ENCODE measurements at regions of chr4 and their contacts with region 1.

Region 1: DNA sequence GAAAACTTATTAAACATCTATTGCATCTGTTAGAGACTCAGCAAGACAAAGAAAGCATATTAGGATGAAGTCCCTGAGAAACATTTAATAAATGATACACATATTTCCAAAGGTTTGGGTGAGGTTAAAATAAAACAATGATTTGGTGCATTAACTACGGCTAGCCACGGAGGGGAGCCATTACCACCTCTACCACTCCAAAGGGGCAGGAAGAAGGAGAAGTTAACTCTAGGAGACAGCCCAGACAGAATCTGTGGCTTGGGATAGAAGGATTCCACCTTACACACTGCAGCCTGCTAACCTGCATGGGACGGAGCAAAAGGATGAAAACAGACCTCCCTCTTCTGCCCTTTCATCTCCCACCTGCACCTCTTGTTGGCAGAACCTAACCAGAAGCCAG is 189.1 kb upstream of the C1QTNF7 start:
- DNase-seq: no peak
- ATAC-seq: peak; percentile 91
- H3K4me3 ChIP-seq: no peak overlapping the region
- H3K27ac ChIP-seq: no peak overlapping the region
- H3K4me1 ChIP-seq: no peaks in the 10 kb centered on the region
- H3K27me3 ChIP-seq: no peaks in the 10 kb centered on the region; the same call in 1 of the 2 replicates
- CTCF ChIP-seq: peak; percentile 45 to 67 (median 65); a peak in 4 of 6 replicates
- POLR2A ChIP-seq: no peak
- RAD21 ChIP-seq: peak; percentile 73

Region 2: DNA sequence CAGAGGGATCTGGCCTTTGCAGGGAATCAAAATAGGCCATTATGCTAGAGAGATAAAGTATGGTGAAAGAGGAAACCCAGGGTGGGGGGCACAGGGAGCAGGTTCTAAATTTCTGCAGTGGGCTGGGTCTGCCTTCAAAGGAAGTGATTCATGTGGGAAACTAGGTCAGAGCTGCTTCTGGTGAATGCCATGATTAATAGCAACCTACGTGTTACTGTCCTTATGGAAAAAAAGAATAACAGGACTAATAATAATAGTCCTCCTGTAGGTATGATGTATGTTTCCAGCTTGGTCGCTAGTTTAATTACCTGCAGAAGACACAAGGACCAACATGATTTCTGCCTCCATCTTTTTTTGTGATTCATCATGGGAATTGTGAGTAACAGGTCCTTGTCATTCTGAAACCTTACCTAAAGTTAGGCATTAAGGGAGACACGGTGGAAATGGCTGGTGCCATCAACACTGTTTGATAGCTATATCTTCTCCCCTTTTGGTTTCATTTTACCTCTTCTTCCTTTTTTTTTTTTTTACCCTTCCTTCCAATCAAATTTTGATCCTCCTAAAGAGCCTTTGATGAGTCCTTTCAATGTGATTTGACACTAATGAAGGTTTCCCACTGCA is 56.0 kb before region 1 on chr4:
- CTCF ChIA-PET with region 1: no interaction called
- POLR2A ChIA-PET with region 1: no interaction called
- RAD21 ChIA-PET with region 1: no interaction called
- intact Hi-C with region 1: no loop called
- DNase-seq: no peak
- ATAC-seq: no peak
- H3K4me3 ChIP-seq: no peak overlapping the region
- H3K27ac ChIP-seq: no peak overlapping the region
- H3K4me1 ChIP-seq: no peaks in the 10 kb centered on the region
- H3K27me3 ChIP-seq: no peaks in the 10 kb centered on the region
- CTCF ChIP-seq: no peak
- POLR2A ChIP-seq: no peak
- RAD21 ChIP-seq: no peak

Region 3: DNA sequence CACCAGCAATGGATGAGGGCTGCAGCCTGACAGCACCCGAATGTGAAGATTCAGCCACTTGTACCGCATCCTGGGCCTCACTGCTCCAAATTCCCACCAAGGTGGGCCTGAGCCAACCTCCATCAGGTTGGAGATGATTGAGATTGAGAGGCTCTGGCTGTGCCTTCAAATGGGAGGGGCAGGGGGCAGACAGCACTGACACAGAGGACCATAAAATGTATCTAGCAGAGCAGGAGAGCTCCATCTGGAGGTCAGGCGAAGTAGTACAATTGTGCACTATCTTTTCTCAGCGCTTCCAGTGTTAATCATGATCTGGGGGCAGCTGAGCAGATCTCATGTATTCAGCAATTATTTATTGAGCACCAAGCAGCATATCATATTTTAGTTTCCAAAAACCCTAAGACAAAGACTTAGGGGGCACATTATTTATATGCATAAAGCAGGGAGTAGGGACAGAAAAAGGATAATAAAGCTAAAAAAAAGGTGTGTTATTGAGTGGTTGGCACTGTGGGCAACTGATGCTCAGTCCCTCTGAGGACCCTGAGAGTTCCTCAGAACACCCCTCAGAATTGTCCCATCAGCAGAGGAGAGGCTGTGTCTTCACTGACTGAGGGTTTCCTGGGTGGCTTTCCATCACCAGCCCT is 157.6 kb after region 1 on chr4:
- CTCF ChIA-PET with region 1: interaction called, 7 read pairs
- POLR2A ChIA-PET with region 1: no interaction called
- RAD21 ChIA-PET with region 1: no interaction called
- intact Hi-C with region 1: loop called (anchors 1 kb)
- DNase-seq: peak; percentile 34
- ATAC-seq: peak; percentile 95
- H3K4me3 ChIP-seq: no peak overlapping the region
- H3K27ac ChIP-seq: no peak overlapping the region
- H3K4me1 ChIP-seq: peaks cover 0 to 9% of the 10 kb centered on the region in 2 experiments; a peak in 3 of 4 replicates
- H3K27me3 ChIP-seq: no peaks in the 10 kb centered on the region
- CTCF ChIP-seq: peak; percentile 47 to 84 (median 76); a peak in 5 of 6 replicates
- POLR2A ChIP-seq: no peak
- RAD21 ChIP-seq: peak; percentile 67

Region 4: DNA sequence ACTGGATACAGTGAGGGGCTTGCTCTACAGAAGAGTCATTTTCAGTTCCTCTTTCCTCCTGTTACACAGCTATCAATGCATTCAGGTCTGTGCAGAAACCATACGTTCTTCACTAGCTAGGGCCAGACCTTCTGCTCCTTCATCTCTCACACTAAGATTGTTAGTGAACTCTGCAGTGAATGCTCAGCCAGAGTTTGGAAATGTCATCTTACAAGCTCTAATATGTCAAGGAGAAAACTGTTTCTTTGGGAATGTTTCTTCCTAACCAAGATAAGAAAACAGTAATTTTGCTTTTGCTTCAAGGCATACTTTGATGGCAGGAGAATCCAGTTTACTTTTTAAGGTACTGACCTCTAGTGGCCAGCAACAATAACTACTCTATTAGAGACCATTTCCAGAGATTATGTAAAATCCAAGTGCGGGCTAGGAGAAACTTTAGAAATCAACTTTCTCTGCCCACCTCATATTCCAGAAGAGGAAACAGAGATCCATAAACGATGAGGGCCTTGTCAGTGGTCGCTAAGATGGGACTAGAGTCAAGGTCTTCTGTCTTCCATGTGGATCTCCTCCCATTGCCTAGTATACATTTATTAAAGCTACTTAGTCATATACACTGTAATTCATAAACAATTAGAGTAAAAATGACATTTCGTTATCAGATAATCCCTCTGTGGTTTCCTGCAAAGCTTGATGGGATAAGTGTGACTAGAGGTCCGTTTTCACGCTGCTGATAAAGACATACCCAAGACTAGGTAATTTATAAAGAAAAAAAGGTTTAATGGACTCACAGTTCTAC is 218.9 kb after region 1 on chr4:
- CTCF ChIA-PET with region 1: interaction called, 5 read pairs
- POLR2A ChIA-PET with region 1: no interaction called
- RAD21 ChIA-PET with region 1: interaction called in 1 of 2 experiments, 3 read pairs
- intact Hi-C with region 1: loop called (anchors 1 kb)
- DNase-seq: no peak
- ATAC-seq: peak; percentile 88
- H3K4me3 ChIP-seq: no peak overlapping the region
- H3K27ac ChIP-seq: no peak overlapping the region
- H3K4me1 ChIP-seq: peaks cover 0 to under 1% of the 10 kb centered on the region in 2 experiments; a peak in 1 of 4 replicates
- H3K27me3 ChIP-seq: peaks cover 17% of the 10 kb centered on the region; the same call in 1 of the 2 replicates
- CTCF ChIP-seq: peak; percentile 45 to 78 (median 67); a peak in 5 of 6 replicates
- POLR2A ChIP-seq: no peak
- RAD21 ChIP-seq: peak; percentile 68

Measured in HCT116 (cell line).